Naive thymus-derived CD4-positive, alpha-beta T cell (primary cell): ENCODE measurements at regions of chr1 and their contacts with region 1.

Region 1: DNA sequence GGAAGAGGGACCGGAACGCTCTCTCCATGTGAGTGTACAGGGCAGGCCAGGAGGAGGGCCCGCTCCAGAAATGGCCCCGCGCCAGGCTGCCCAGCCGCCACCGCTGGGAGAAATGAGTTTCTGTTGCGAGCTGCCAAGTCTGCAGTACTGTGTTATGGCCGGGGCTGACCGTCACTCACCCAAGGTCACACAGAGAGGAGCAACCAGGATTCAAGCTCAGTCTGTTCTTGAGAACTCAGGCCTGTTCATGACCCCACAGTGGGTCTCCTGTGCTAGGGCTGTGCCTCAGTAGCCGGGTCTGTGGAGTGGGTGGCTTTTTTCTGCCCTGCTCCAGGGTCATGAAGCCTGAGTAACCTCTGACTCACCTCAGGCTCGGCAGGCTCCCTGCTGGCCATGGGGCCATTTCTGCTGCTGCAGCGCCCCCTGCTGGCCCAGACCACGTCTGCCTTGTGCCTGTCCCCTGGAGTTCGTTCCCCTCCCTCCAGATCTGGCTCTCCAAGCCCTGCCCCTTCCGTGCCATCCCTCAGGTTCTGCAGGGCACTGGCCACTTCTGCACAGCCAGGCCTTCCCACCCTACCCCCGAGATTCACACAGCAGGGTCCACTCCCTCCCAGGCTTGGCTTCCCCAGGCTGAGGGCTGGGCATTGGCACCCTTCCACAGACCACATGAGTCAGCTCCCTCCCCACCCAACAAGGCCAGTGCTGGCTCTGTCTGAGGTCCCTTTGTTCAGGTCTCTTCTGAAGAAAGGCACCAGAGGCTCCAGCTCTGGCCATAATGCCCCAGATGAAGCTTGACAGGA is 51.8 kb downstream of the EDN2 start:
- DNase-seq: peak; percentile 21 to 80 (median 52)
- ATAC-seq: peak; percentile 89
- H3K4me3 ChIP-seq: no peak overlapping the region
- H3K4me3 Mint-ChIP-seq: no peak overlapping the region
- H3K27ac ChIP-seq: no peak overlapping the region
- H3K27ac Mint-ChIP-seq: no peak overlapping the region
- H3K4me1 ChIP-seq: no peaks in the 10 kb centered on the region
- H3K4me1 Mint-ChIP-seq: peaks cover 0 to 8% (median 0%) of the 10 kb centered on the region in 7 donors
- H3K27me3 ChIP-seq: no peaks in the 10 kb centered on the region
- H3K27me3 Mint-ChIP-seq: peaks cover 14 to 41% (median 37%) of the 10 kb centered on the region in 5 donors

Region 2: DNA sequence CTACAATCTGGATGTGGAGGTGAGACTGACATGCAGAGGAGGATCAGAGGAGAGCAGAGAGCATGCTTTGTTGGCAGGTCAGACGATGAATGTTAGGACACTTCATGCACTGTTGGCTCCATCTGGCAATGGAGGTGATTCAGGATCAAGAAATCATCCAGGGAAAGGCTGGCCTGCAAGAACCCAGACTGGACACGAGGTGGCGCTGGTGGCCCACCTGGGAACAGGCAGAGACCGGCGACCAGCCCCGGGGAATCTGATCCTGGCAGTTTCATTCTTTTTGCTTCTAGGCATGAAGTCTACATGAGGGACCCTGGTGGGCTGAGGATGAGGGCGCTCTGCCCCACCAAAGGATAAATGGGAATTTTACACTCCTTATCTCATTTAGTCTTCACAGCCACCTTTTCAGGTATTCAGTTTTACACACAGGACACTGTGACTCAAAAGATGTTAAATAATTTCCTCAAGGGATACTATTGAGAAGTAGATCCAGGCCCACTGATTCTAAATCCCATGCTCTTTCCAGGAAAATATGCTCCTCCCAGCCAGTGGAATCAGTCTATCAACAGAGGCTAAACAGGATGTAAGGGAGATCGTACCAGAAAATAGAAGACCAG is 164.4 kb before region 1 on chr1:
- CTCF ChIA-PET with region 1: interaction called, 4 read pairs
- POLR2A ChIA-PET with region 1: no interaction called
- intact Hi-C with region 1: loop called (anchors 1 kb)
- DNase-seq: peak; percentile 33 to 68 (median 59)
- ATAC-seq: peak; percentile 65
- H3K4me3 ChIP-seq: no peak overlapping the region
- H3K4me3 Mint-ChIP-seq: no peak overlapping the region
- H3K27ac ChIP-seq: no peak overlapping the region
- H3K27ac Mint-ChIP-seq: no peak overlapping the region
- H3K4me1 ChIP-seq: no peaks in the 10 kb centered on the region
- H3K4me1 Mint-ChIP-seq: peaks cover 0 to 6% (median 1%) of the 10 kb centered on the region in 7 donors
- H3K27me3 ChIP-seq: no peaks in the 10 kb centered on the region
- H3K27me3 Mint-ChIP-seq: peaks cover 0 to 13% (median 0%) of the 10 kb centered on the region in 5 donors

Region 3: DNA sequence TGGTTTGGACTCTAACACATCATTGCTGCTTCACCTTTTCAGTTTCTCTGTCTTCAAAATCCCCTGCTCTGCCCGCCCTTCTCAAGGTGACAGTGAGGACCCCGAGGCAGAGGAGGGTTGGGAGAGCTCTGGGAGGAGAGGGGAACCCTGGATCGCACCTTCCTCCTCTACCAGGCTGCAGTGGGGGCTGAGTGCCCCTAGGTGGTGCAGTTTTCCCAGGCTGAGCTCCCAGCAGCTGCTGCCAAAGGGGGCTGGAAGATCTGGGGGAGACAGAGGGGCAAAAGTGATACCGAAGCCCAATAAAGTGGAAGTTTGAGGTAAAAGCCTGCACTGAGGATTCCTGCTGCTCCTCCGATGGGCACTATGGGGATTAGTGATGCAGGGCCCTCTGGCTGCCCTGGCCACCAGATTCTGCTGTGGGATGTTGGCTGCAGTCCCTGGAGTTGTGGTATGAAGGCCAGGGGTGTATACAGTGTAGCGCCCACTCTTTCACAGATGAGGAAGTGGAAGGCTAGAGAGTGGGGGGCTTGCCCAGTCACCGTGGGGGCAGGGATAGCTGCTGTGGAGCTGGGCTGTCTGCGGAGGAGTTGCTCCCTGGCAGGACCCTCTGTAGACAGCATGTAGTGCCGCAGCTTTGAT is 149.9 kb before region 1 on chr1:
- CTCF ChIA-PET with region 1: interaction called, 3 read pairs
- POLR2A ChIA-PET with region 1: no interaction called
- intact Hi-C with region 1: loop called (anchors 5 kb)
- DNase-seq: peak in 4 of 9 donors; percentile 3 to 28 (median 10)
- ATAC-seq: peak; percentile 64
- H3K4me3 ChIP-seq: no peak overlapping the region
- H3K4me3 Mint-ChIP-seq: no peak overlapping the region
- H3K27ac ChIP-seq: no peak overlapping the region
- H3K27ac Mint-ChIP-seq: no peak overlapping the region
- H3K4me1 ChIP-seq: no peaks in the 10 kb centered on the region
- H3K4me1 Mint-ChIP-seq: peaks cover 0 to 8% (median 0%) of the 10 kb centered on the region in 7 donors
- H3K27me3 ChIP-seq: no peaks in the 10 kb centered on the region
- H3K27me3 Mint-ChIP-seq: peaks cover 21 to 49% (median 35%) of the 10 kb centered on the region in 5 donors

Region 4: DNA sequence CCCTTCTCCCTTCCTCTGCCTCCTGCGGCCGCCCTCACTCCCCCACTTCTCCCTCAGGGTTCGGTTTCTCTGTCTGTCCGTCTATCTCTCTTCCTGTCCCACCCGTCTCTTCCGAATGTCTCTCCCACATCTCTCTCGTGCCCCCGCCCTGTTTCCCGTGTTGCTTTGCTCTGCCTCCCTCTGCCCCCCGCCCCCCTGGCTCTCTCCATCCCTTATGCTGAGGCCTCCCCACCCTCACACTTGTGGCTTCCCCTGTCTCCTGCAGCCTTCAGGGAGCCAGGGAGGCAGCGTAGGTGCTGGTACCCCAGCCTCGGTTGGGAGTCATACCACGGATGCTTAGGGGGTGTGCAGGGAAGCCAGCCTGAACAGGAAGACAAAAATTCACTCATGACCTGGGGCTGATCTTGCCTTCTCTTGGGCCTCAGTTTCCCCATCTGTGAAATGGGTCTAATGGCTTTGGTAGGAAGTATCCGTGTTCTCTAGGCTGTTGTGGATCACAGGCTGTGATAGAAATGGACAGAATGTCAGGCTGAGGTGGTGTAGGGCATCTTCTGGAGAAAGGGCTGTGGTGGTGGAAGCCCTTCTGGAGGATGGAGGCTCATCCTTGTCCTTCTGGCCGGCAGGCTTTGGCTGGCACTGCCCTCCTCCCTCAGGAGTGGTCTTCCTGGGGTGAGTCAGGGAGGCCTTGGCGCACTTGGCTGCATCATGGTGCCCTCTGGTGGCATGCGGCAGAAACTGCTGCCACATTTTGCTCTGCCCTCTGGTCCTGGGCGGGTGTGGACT is 15.9 kb before region 1 on chr1:
- CTCF ChIA-PET with region 1: no interaction called
- POLR2A ChIA-PET with region 1: no interaction called
- intact Hi-C with region 1: no loop called
- DNase-seq: peak; percentile 10 to 65 (median 51)
- ATAC-seq: peak; percentile 77
- H3K4me3 ChIP-seq: no peak overlapping the region
- H3K4me3 Mint-ChIP-seq: no peak overlapping the region
- H3K27ac ChIP-seq: no peak overlapping the region
- H3K27ac Mint-ChIP-seq: no peak overlapping the region
- H3K4me1 ChIP-seq: no peaks in the 10 kb centered on the region
- H3K4me1 Mint-ChIP-seq: peaks cover 0 to 5% (median 0%) of the 10 kb centered on the region in 7 donors
- H3K27me3 ChIP-seq: no peaks in the 10 kb centered on the region
- H3K27me3 Mint-ChIP-seq: peaks cover 0 to 14% (median 4%) of the 10 kb centered on the region in 5 donors